Activated CD8-positive, alpha-beta T cell treated with anti-CD3 and anti-CD28 coated beads, Interleukin-2, amount 10 ng/mL, durations not matched to agents 7 days and 5 days (primary cell): ENCODE measurements at regions of chr3 and their contacts with region 1.

Region 1: GRCh38 chr3:197256836-197257444 is 41.5 kb downstream of the DLG1 start:
- DNase-seq: peak; percentile 56
- ATAC-seq: no peak
- H3K4me3 Mint-ChIP-seq: no peak overlapping the region
- H3K27ac Mint-ChIP-seq: no peak overlapping the region
- H3K4me1 Mint-ChIP-seq: peaks cover 25% of the 10 kb centered on the region
- H3K27me3 Mint-ChIP-seq: no peaks in the 10 kb centered on the region

Region 2: DNA sequence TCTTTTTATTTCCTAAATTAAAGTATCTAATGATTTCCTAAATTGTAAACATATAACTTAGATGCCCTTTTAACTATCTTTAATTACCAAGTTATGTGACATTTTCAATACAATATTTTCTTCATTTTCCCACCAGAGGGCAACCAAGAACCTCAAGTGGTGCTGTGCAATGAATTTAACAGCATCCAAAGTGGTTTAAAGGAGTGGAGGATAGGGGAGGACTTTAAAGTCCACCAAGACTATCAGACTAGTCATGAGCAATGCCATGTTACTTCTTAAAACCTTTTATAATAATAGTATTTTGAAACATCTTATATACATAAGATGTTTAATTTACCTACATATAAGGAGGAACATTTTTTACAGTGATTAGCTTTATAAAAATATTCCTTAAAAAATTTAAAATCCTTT is 32.9 kb before region 1 on chr3:
- CTCF ChIA-PET with region 1: interaction called, 26 read pairs
- POLR2A ChIA-PET with region 1: no interaction called
- DNase-seq: no peak
- ATAC-seq: no peak
- H3K4me3 Mint-ChIP-seq: no peak overlapping the region
- H3K27ac Mint-ChIP-seq: no peak overlapping the region
- H3K4me1 Mint-ChIP-seq: peaks cover 8% of the 10 kb centered on the region
- H3K27me3 Mint-ChIP-seq: no peaks in the 10 kb centered on the region

Region 3: GRCh38 chr3:197268294-197268693 is 11.4 kb after region 1 on chr3:
- CTCF ChIA-PET with region 1: interaction called, 20 read pairs
- POLR2A ChIA-PET with region 1: no interaction called
- DNase-seq: no peak
- ATAC-seq: no peak
- H3K4me3 Mint-ChIP-seq: no peak overlapping the region
- H3K27ac Mint-ChIP-seq: no peak overlapping the region
- H3K4me1 Mint-ChIP-seq: peaks cover 2% of the 10 kb centered on the region
- H3K27me3 Mint-ChIP-seq: no peaks in the 10 kb centered on the region

Region 4: GRCh38 chr3:197456261-197457091 is 199.5 kb after region 1 on chr3:
- CTCF ChIA-PET with region 1: interaction called, 50 read pairs
- POLR2A ChIA-PET with region 1: no interaction called
- DNase-seq: peak; percentile 56
- ATAC-seq: peak; percentile 59
- H3K4me3 Mint-ChIP-seq: peak overlapping the region; percentile 70
- H3K27ac Mint-ChIP-seq: peak overlapping the region; percentile 73
- H3K4me1 Mint-ChIP-seq: peaks cover 17% of the 10 kb centered on the region
- H3K27me3 Mint-ChIP-seq: peaks cover 22% of the 10 kb centered on the region

Region 5: DNA sequence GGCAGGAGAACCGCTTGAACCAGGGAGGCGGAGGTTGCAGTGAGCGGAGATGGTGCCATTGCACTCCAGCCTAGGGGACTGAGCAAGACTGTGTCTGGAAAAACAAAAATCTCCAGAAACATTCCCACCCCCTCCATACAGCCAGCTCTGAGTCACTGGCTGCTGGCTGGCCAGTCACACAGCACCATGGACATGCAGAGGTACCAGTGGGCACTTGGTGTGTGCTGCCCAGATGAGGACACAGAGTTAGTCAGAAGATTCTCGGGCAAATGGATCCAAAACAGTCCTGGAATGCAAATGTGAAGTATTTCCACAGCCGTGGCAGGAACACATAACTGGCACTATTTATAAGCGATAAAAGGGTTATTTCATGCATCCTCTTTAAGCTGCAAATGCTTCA is 254.2 kb after region 1 on chr3:
- CTCF ChIA-PET with region 1: interaction called, 24 read pairs
- POLR2A ChIA-PET with region 1: no interaction called
- DNase-seq: no peak
- ATAC-seq: no peak
- H3K4me3 Mint-ChIP-seq: no peak overlapping the region
- H3K27ac Mint-ChIP-seq: no peak overlapping the region
- H3K4me1 Mint-ChIP-seq: peaks cover 16% of the 10 kb centered on the region
- H3K27me3 Mint-ChIP-seq: no peaks in the 10 kb centered on the region